Naive thymus-derived CD8-positive, alpha-beta T cell (primary cell): ENCODE measurements at regions of chr19 and their contacts with region 1.

Region 1: DNA sequence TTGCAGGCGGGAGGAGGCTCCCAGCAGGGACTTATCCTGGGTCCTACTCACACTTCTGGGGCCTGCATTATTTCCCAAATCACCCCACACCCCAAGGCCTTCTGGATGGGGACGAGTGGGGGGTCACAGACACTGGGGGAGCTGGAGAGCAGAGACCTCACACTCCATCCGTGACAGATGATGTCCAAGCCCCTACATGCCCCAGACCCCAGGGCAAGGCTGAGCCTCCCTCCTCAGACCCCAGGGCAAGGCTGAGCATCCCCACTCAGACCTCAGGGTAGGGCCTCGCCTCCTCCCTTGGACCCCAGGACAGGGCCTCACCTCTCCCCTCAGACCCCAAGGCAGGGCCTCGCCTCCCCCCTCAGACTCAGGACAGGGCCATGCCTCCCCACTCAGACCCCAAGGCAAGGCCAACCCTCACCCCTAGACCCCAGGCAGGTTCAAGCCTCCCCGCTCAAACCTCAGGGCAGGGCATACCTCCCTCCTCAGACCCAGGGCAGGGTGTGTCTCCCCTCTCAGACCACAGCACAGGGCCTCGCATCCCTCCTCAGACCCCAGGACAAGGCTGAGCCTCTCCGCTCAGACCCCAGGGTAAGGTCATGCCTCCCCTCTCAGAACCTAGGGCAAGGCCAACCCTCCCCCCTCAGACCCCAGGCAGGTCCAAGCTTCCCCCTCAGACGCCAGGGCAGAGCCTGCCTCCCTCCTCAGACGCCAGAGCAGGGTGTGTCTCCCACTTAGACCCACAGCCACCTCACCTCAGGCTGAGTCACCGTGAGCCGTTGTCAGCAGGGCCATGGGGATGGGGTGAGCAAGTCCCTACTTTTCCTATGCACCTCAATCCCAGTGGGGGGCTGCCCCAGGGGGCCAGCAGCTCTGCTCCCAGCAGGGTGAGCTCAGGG is 1.7 kb upstream of the S1PR4 start:
- DNase-seq: peak in 7 of 10 donors; percentile 41 to 82 (median 53)
- ATAC-seq: peak; percentile 45 to 56
- H3K4me3 Mint-ChIP-seq: peak overlapping the region; percentile 72 to 91 (median 87)
- H3K27ac Mint-ChIP-seq: peak overlapping the region; percentile 80 to 99 (median 96)
- H3K4me1 Mint-ChIP-seq: peaks cover 12 to 40% (median 27%) of the 10 kb centered on the region in 4 donors
- H3K27me3 Mint-ChIP-seq: no peaks in the 10 kb centered on the region

Region 2: GRCh38 chr19:2887391-2887914 is 289.4 kb before region 1 on chr19:
- POLR2A ChIA-PET with region 1: no interaction called
- DNase-seq: peak in 2 of 10 donors; percentile 25 to 27
- ATAC-seq: no peak
- H3K4me3 Mint-ChIP-seq: peak overlapping the region in 2 of 10 donors; percentile 3
- H3K27ac Mint-ChIP-seq: peak overlapping the region in 4 of 10 donors; percentile 2 to 75 (median 38)
- H3K4me1 Mint-ChIP-seq: peaks cover 2 to 11% (median 10%) of the 10 kb centered on the region in 4 donors
- H3K27me3 Mint-ChIP-seq: peaks cover 0 to 2% (median 0%) of the 10 kb centered on the region in 5 donors

Region 3: DNA sequence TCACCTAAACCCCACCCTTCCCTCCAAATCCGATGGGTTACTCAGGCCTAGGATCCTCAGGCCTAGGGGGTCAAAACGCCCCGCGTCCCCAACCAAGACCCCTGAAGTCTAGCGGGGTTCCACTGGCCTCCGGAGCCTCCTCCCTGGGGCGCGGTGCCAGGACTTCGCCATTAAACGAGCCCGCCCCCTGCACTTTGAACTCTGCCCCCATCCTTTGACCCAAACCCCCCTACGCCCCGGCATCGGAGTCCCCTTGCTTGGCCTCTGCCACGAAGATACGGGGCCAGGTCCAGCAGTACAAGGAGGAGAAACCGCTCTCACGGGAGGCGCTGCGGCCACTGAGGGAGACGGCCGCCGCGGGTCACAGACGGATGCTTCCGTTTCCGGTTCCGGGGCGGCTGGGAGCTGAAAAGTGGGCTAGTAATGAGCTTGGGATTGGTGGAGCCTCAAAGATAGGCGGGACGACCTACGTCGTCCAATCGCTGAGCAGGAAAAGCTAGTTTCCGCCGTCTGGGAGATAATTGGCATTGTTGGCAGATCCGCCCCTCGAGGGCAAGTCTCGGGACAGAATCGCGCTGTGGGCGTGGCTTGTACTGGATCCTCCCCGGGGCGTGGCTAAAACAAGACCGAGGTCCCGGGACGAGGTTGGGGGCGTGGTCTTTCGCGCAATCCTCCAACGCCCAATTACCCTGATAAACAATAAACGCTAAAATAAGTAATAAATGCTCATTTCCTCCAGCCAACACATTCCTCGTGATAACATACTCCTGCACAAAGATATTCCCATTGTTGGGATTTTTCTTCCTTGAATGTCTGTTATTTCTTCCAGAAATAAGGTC is 226.3 kb before region 1 on chr19:
- POLR2A ChIA-PET with region 1: interaction called, 17 read pairs
- DNase-seq: peak; percentile 99 to 100 (median 100)
- ATAC-seq: peak; percentile 95 to 96
- H3K4me3 Mint-ChIP-seq: peak overlapping the region; percentile 91 to 98 (median 96)
- H3K27ac Mint-ChIP-seq: peak overlapping the region; percentile 95 to 99 (median 98)
- H3K4me1 Mint-ChIP-seq: peaks cover 9 to 30% (median 28%) of the 10 kb centered on the region in 4 donors
- H3K27me3 Mint-ChIP-seq: no peaks in the 10 kb centered on the region

Region 4: DNA sequence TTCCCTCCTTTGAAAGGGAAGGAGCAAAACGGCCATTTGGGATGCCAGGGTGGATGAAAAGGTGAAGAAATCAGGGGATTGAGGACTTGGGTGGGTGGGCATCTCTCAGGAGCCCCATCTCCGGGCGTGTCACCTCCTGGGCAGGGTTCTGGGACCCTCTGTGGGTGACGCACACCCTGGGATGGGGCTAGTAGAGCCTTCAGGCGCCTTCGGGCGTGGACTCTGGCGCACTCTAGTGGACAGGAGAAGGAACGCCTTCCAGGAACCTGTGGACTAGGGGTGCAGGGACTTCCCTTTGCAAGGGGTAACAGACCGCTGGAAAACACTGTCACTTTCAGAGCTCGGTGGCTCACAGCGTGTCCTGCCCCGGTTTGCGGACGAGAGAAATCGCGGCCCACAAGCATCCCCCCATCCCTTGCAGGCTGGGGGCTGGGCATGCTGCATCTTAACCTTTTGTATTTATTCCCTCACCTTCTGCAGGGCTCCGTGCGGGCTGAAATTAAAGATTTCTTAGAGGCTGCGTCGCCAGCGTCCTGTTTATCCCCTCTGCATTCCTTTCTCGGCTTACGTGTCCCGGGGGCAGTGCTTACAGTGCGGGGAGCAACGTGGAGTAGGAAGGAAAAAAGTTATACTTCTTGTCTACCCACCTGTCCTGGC is 13.5 kb before region 1 on chr19:
- POLR2A ChIA-PET with region 1: interaction called, 14 read pairs
- DNase-seq: peak; percentile 50 to 83 (median 67)
- ATAC-seq: peak; percentile 97 to 99
- H3K4me3 Mint-ChIP-seq: peak overlapping the region in 4 of 10 donors; percentile 24 to 65 (median 55)
- H3K27ac Mint-ChIP-seq: peak overlapping the region in 8 of 10 donors; percentile 3 to 80 (median 64)
- H3K4me1 Mint-ChIP-seq: peaks cover 11 to 40% (median 17%) of the 10 kb centered on the region in 4 donors
- H3K27me3 Mint-ChIP-seq: no peaks in the 10 kb centered on the region